Endothelial cell of umbilical vein (primary cell): ENCODE measurements at regions of chr13 and their contacts with region 1.

Region 1: DNA sequence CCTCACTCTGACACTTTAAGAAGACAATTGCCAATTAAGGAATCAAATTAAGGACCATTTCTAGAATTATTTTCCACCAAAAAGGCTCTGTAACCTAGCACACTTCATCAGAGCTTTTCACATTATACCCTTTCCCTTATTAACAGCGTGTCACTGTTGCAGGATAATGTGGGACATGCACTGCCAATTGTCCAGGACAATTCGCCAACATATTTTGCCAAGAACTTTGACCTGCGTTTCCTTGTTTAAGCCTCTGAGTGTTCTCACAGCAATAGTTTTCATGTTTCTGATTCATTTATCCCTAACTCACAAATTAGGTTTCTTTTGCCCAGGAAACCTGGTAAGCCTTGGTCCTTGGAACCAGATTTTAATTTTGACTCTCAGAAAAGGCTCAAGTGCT is 13.3 kb downstream of the COL4A1 start:
- DNase-seq: peak; percentile 24
- H3K4me3 ChIP-seq: no peak overlapping the region
- H3K27ac ChIP-seq: no peak overlapping the region
- H3K4me1 ChIP-seq: peaks cover 27% of the 10 kb centered on the region
- H3K27me3 ChIP-seq: no peaks in the 10 kb centered on the region
- CTCF ChIP-seq: no peak
- POLR2A ChIP-seq: no peak

Region 2: GRCh38 chr13:110279684-110280521 is 13.7 kb before region 1 on chr13:
- CTCF ChIA-PET with region 1: interaction called, 3 read pairs
- POLR2A ChIA-PET with region 1: no interaction called
- dilution Hi-C with region 1: no loop called
- intact Hi-C with region 1: loop called (anchors 2 kb)
- DNase-seq: no peak
- H3K4me3 ChIP-seq: no peak overlapping the region
- H3K27ac ChIP-seq: no peak overlapping the region
- H3K4me1 ChIP-seq: no peaks in the 10 kb centered on the region
- H3K27me3 ChIP-seq: no peaks in the 10 kb centered on the region
- CTCF ChIP-seq: no peak
- POLR2A ChIP-seq: no peak